Activated B cell treated with CpG ODN at 0.5 μM for 24 hours (primary cell): ENCODE measurements at regions of chr5 and their contacts with region 1.

Region 1: DNA sequence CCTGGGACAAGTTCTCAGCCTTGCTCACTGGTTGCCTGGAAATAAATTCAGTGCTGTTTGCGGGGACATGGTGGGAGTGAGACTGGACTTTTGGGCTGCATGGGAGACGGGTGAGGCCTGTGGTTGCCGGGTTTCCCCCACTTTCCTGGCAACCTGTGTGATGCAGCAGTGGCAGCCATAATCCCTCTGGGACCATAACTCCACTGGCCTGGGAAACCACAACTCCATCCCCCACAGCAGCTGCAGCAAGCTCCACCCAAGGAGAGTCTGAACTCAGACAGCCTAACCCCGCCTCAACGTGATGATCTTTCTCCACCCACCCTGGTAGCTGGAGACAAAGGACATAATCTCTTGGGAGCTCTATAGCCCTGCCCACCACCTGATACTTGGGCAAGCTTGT is 349.9 kb downstream of the PIK3R1 start:
- DNase-seq: peak; percentile 51
- ATAC-seq: peak; percentile 98
- H3K4me3 Mint-ChIP-seq: peak overlapping the region; percentile 45
- H3K27ac Mint-ChIP-seq: peak overlapping the region; percentile 71
- H3K4me1 Mint-ChIP-seq: peaks cover 22% of the 10 kb centered on the region
- H3K27me3 Mint-ChIP-seq: no peaks in the 10 kb centered on the region
- CTCF ChIP-seq: no peak

Region 2: DNA sequence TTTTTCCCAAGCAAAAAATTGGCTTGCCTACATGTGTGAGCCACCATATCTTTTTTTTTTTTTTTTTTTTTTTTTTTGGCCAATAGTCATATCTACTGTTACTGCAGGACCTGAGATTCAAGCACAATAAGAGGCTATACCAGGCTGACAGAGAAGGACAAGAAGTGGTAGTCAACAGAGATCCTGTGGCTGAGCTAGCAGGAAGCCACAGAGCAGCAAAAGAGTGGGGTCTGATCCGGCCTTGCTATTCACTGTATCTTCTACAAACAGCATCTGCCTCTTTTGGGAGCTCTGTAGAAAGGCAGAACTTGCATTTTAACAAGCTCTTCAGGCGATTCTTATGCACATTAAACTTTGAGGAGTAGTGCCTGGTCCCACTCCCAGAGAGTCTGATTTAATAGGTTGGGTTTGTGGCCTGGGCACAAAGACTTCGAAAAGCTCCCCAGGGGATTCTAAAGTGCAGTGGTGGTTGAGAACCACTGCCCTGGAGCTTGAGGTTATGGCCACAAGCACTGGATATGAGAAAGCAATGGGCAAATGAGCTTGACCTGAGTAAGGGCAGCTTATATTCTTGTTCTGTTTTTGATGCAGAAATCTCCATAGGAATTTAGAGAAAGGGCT is 187.1 kb before region 1 on chr5:
- CTCF ChIA-PET with region 1: no interaction called
- POLR2A ChIA-PET with region 1: no interaction called
- intact Hi-C with region 1: no loop called
- DNase-seq: no peak
- ATAC-seq: no peak
- H3K4me3 Mint-ChIP-seq: no peak overlapping the region
- H3K27ac Mint-ChIP-seq: no peak overlapping the region
- H3K4me1 Mint-ChIP-seq: peaks cover 33% of the 10 kb centered on the region
- H3K27me3 Mint-ChIP-seq: no peaks in the 10 kb centered on the region
- CTCF ChIP-seq: no peak

Region 3: GRCh38 chr5:68576805-68577204 is 11.4 kb after region 1 on chr5:
- CTCF ChIA-PET with region 1: no interaction called
- POLR2A ChIA-PET with region 1: no interaction called
- intact Hi-C with region 1: no loop called
- DNase-seq: no peak
- ATAC-seq: no peak
- H3K4me3 Mint-ChIP-seq: no peak overlapping the region
- H3K27ac Mint-ChIP-seq: no peak overlapping the region
- H3K4me1 Mint-ChIP-seq: no peaks in the 10 kb centered on the region
- H3K27me3 Mint-ChIP-seq: peaks cover 2% of the 10 kb centered on the region
- CTCF ChIP-seq: no peak

Region 4: GRCh38 chr5:68644971-68645370 is 79.5 kb after region 1 on chr5:
- CTCF ChIA-PET with region 1: no interaction called
- POLR2A ChIA-PET with region 1: no interaction called
- intact Hi-C with region 1: loop called (anchors 5 kb)
- DNase-seq: no peak
- ATAC-seq: peak; percentile 96
- H3K4me3 Mint-ChIP-seq: peak overlapping the region; percentile 24
- H3K27ac Mint-ChIP-seq: no peak overlapping the region
- H3K4me1 Mint-ChIP-seq: peaks cover 16% of the 10 kb centered on the region
- H3K27me3 Mint-ChIP-seq: no peaks in the 10 kb centered on the region
- CTCF ChIP-seq: no peak